ENCODE measurements at regions of chr5 and their contacts with region 1.

Region 1: GRCh38 chr5:137743031-137743640 is 7.2 kb upstream of the KLHL3 start:
- DNase-seq: peak; percentile 71
- H3K4me3 Mint-ChIP-seq: no peak overlapping the region
- H3K27ac Mint-ChIP-seq: no peak overlapping the region
- H3K4me1 Mint-ChIP-seq: no peaks in the 10 kb centered on the region
- H3K27me3 Mint-ChIP-seq: no peaks in the 10 kb centered on the region
- CTCF ChIP-seq: peak; percentile 68

Region 2: DNA sequence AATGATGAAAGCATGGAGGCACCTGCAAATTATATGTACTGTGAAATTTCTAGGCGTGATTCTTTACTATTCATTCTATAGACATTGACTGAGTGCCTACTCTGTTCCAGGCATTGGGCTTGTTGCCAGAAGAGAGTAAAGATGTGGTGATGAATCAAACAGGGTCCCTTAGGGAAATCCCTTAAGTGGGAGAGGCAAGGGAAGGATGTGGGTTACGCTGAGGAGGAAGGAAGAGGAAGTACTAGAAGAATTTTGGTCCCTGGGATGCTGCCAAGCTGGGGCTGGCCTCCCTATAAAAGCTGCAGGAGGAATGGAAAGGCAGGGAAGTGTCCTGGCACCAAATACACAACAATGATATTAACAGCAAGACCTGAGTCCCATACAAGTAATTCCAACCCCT is 167.3 kb before region 1 on chr5:
- CTCF ChIA-PET with region 1: interaction called, 10 read pairs
- intact Hi-C with region 1: no loop called
- DNase-seq: peak; percentile 55
- H3K4me3 Mint-ChIP-seq: no peak overlapping the region
- H3K27ac Mint-ChIP-seq: peak overlapping the region; percentile 10
- H3K4me1 Mint-ChIP-seq: peaks cover 45% of the 10 kb centered on the region
- H3K27me3 Mint-ChIP-seq: no peaks in the 10 kb centered on the region
- CTCF ChIP-seq: no peak

Region 3: GRCh38 chr5:137665678-137666460 is 77.3 kb before region 1 on chr5:
- CTCF ChIA-PET with region 1: interaction called, 152 read pairs
- intact Hi-C with region 1: no loop called
- DNase-seq: peak; percentile 63
- H3K4me3 Mint-ChIP-seq: peak overlapping the region; percentile 14
- H3K27ac Mint-ChIP-seq: peak overlapping the region; percentile 28
- H3K4me1 Mint-ChIP-seq: peaks cover 68% of the 10 kb centered on the region
- H3K27me3 Mint-ChIP-seq: no peaks in the 10 kb centered on the region
- CTCF ChIP-seq: no peak